Esophagus squamous epithelium (tissue), 5 donors: ENCODE measurements at regions of chr1 and their contacts with region 1.

Region 1: DNA sequence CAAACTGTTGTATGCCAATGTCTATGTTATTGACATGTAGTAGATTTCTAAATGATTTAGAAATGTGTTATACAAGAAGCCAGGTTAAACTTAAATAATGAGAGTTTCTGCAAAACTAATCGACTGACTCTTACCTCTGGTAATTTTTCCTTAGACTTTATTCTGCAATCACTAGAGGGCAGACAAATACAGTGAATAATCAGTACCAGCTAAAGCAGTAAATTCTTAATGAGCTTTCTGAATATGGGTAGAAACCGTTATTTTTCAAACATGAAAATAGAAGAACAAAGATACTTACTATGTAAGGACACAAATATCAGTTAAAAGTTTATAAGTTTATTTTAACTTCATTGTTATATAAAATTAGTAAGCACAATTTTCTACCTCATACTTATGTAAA is 97.9 kb upstream of the RGS1 start:
- DNase-seq: no peak
- H3K4me3 ChIP-seq: no peak overlapping the region
- H3K27ac ChIP-seq: peak overlapping the region in 1 of 4 donors; percentile 26
- H3K4me1 ChIP-seq: peaks cover 0 to 6% (median 0%) of the 10 kb centered on the region in 3 donors
- H3K27me3 ChIP-seq: peaks cover 0 to 12% (median 0%) of the 10 kb centered on the region in 4 donors
- CTCF ChIP-seq: peak in 5 of 6 experiments; percentile 11 to 73 (median 47)
- POLR2A ChIP-seq: no peak

Region 2: GRCh38 chr1:192609110-192610079 is 131.8 kb after region 1 on chr1:
- intact Hi-C with region 1: loop called (anchors 5 kb)
- DNase-seq: peak; percentile 29
- H3K4me3 ChIP-seq: no peak overlapping the region
- H3K27ac ChIP-seq: peak overlapping the region in 2 of 4 donors; percentile 25 to 27
- H3K4me1 ChIP-seq: no peaks in the 10 kb centered on the region
- H3K27me3 ChIP-seq: no peaks in the 10 kb centered on the region
- CTCF ChIP-seq: no peak
- POLR2A ChIP-seq: peak in 1 of 4 donors; percentile 23

Region 3: GRCh38 chr1:192700834-192701271 is 223.2 kb after region 1 on chr1:
- intact Hi-C with region 1: no loop called
- DNase-seq: no peak
- H3K4me3 ChIP-seq: no peak overlapping the region
- H3K27ac ChIP-seq: no peak overlapping the region
- H3K4me1 ChIP-seq: no peaks in the 10 kb centered on the region
- H3K27me3 ChIP-seq: no peaks in the 10 kb centered on the region
- CTCF ChIP-seq: no peak
- POLR2A ChIP-seq: no peak